PC-3 (cell line): ENCODE measurements at regions of chr1 and their contacts with region 1.

Region 1: DNA sequence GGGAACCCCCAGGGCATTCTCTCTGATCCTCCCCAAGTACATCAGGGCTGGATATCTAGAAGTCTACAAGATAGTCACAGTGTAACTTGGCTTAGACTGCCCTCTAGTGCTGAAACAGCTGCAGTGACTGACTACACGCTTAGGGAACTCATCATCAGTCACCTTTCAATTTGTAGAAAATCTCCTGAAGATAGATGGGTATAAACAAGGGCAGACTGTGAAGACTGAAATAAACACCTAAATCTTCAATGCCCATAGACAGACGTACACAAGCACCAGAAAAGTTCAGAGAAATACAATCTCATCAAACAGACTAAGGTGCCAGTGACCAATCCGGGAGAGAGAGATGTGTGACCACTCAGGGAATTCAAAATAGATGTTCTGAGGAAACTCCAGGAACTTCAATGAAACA is 46.6 kb downstream of the PACC1 start:
- DNase-seq: peak; percentile 94
- ATAC-seq: peak; percentile 99
- H3K4me3 ChIP-seq: no peak overlapping the region
- H3K27ac ChIP-seq: no peak overlapping the region
- H3K4me1 ChIP-seq: no peaks in the 10 kb centered on the region
- H3K27me3 ChIP-seq: no peaks in the 10 kb centered on the region
- CTCF ChIP-seq: peak; percentile 99

Region 2: GRCh38 chr1:212062832-212063438 is 305.1 kb before region 1 on chr1:
- CTCF ChIA-PET with region 1: interaction called, 3 read pairs
- POLR2A ChIA-PET with region 1: no interaction called
- intact Hi-C with region 1: loop called (anchors 1 kb)
- DNase-seq: peak; percentile 73
- ATAC-seq: peak; percentile 79
- H3K4me3 ChIP-seq: no peak overlapping the region
- H3K27ac ChIP-seq: no peak overlapping the region
- H3K4me1 ChIP-seq: peaks cover 18% of the 10 kb centered on the region
- H3K27me3 ChIP-seq: no peaks in the 10 kb centered on the region
- CTCF ChIP-seq: peak; percentile 96

Region 3: GRCh38 chr1:212291505-212292134 is 76.5 kb before region 1 on chr1:
- CTCF ChIA-PET with region 1: no interaction called
- POLR2A ChIA-PET with region 1: no interaction called
- intact Hi-C with region 1: loop called (anchors 2 kb)
- DNase-seq: peak; percentile 84
- ATAC-seq: peak; percentile 52
- H3K4me3 ChIP-seq: no peak overlapping the region
- H3K27ac ChIP-seq: no peak overlapping the region
- H3K4me1 ChIP-seq: peaks cover 45% of the 10 kb centered on the region
- H3K27me3 ChIP-seq: no peaks in the 10 kb centered on the region
- CTCF ChIP-seq: peak; percentile 99

Region 4: DNA sequence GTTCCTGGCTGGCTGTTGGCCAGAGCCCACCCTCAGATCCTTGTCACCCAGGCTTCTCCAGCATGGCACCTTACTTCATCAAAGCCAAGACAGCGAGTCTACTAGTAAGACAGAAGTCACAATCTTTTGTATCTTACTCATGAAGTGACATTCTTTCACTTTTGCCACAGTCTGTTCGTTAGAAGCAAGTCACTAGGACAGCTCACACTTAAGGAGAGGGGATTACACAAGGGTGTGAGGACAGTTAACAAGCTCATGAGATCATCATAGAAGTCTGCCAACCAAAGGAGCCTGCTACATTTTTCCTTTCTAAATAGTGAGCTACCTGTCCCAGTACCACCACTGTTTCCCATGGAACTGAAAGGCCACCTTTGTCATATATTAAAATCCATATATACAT is 14.9 kb before region 1 on chr1:
- CTCF ChIA-PET with region 1: no interaction called
- POLR2A ChIA-PET with region 1: interaction called, 19 read pairs
- intact Hi-C with region 1: no loop called
- DNase-seq: no peak
- ATAC-seq: no peak
- H3K4me3 ChIP-seq: no peak overlapping the region
- H3K27ac ChIP-seq: no peak overlapping the region
- H3K4me1 ChIP-seq: no peaks in the 10 kb centered on the region
- H3K27me3 ChIP-seq: no peaks in the 10 kb centered on the region
- CTCF ChIP-seq: no peak

Region 5: DNA sequence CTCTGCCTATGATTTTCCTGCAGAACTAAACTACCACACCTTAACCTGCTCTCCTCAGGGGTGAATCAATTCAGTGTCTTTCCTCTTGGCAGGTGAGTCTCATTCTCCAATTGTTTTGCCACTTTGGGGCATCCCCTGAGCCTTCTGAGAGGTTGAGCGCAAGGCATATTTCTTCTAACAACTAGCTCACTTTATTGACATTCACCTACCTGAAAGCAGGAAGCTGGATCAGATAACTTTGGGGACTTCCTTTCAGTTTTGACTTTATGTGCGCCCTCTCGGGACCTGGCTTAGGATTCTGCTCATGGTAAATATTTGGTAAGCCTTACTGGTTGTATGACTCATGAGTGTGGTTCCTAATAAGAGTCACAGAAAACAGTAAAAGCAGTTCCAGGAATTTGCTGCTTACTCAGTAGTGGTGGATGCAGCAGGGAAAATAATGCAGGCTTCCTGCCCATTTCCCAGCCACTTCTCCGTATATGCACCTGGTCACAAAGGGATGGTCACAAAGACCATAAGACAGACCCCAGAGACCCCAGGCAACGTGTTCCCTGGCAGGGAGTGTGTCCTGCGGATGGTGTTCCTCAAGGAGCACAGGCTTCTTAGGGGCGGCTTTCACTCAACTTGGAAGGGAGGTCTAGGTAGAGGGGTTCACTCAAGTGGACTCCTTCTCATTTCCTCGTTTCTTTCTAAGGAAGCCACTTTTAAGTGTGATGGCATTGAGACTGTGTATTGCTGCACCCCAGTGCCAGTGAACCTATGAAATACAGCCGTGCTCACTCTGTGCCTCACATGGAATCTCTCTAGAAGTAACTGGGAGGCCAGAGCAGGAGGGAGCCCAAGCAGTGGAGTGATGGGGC is 353.5 kb after region 1 on chr1:
- CTCF ChIA-PET with region 1: no interaction called
- POLR2A ChIA-PET with region 1: no interaction called
- intact Hi-C with region 1: no loop called
- DNase-seq: peak; percentile 99
- ATAC-seq: peak; percentile 97
- H3K4me3 ChIP-seq: peak overlapping the region; percentile 47
- H3K27ac ChIP-seq: peak overlapping the region; percentile 68
- H3K4me1 ChIP-seq: peaks cover 17% of the 10 kb centered on the region
- H3K27me3 ChIP-seq: no peaks in the 10 kb centered on the region
- CTCF ChIP-seq: no peak; the same call in 1 of the 2 replicates